ENCODE measurements at regions of chr9 and their contacts with region 1.

Region 1: GRCh38 chr9:34591248-34591916 is 1.9 kb upstream of the CNTFR start:
- DNase-seq: peak; percentile 85 to 90
- ATAC-seq: peak; percentile 81 to 96 (median 89)
- H3K4me3 ChIP-seq: peak overlapping the region in 9 of 10 donors; percentile 32 to 57 (median 51)
- H3K27ac ChIP-seq: peak overlapping the region in 6 of 10 donors; percentile 12 to 54 (median 32)
- H3K4me1 ChIP-seq: peaks cover 16 to 53% (median 38%) of the 10 kb centered on the region in 9 donors
- H3K27me3 ChIP-seq: peaks cover 0 to 86% (median 56%) of the 10 kb centered on the region in 7 donors
- CTCF ChIP-seq: peak; percentile 82 to 95 (median 92)

Region 2: DNA sequence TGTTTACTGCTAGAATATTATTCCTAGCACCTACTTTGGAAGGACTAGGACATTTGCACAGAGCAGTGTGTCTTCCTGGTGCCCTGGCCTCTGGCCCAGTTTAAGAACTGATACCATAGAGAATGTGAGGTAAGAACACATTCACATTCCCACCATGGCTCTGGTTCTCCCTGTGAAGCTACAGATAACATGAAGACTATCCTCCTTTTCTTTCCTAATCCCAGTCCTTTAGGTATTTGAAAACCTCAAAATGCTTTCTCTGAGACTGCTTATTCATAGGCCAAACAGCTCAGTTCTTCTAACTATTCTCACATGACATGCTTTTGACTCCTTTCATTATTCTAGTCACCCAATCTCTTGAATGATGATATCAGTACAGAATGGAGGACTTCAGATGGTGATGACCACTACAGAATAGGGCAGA is 144.9 kb before region 1 on chr9:
- intact Hi-C with region 1: loop called in 1 of 10 experiments (anchors 10 kb)
- DNase-seq: no peak
- ATAC-seq: peak in 3 of 8 donors; percentile 30 to 77 (median 51)
- H3K4me3 ChIP-seq: no peak overlapping the region
- H3K27ac ChIP-seq: peak overlapping the region in 1 of 10 donors; percentile 43
- H3K4me1 ChIP-seq: peaks cover 11 to 98% (median 75%) of the 10 kb centered on the region in 9 donors
- H3K27me3 ChIP-seq: no peaks in the 10 kb centered on the region
- CTCF ChIP-seq: no peak

Region 3: GRCh38 chr9:34546834-34547827 is 44.3 kb before region 1 on chr9:
- intact Hi-C with region 1: loop called (anchors 1 to 5 kb)
- DNase-seq: peak; percentile 56 to 64
- ATAC-seq: peak; percentile 44 to 78 (median 68)
- H3K4me3 ChIP-seq: no peak overlapping the region
- H3K27ac ChIP-seq: no peak overlapping the region
- H3K4me1 ChIP-seq: peaks cover 0 to 6% (median 0%) of the 10 kb centered on the region in 9 donors
- H3K27me3 ChIP-seq: peaks cover 0 to 9% (median 3%) of the 10 kb centered on the region in 7 donors
- CTCF ChIP-seq: peak; percentile 44 to 72 (median 67)

Measured in heart right ventricle (tissue), 16 donors.